ENCODE measurements at regions of chr5 and their contacts with region 1.

Region 1: GRCh38 chr5:80198399-80198798 is 57.4 kb downstream of the SERINC5 start:
- DNase-seq: peak; percentile 59
- ATAC-seq: peak; percentile 81 to 87

Region 2: GRCh38 chr5:80083101-80083890 is 115.1 kb before region 1 on chr5:
- intact Hi-C with region 1: no loop called
- DNase-seq: peak; percentile 32
- ATAC-seq: peak; percentile 86 to 90

Region 3: GRCh38 chr5:80238778-80239679 is 40.6 kb after region 1 on chr5:
- intact Hi-C with region 1: loop called in 1 of 2 experiments (anchors 5 kb)
- DNase-seq: peak; percentile 81
- ATAC-seq: peak; percentile 74 to 82